ENCODE measurements at regions of chr9 and their contacts with region 1.

Region 1: GRCh38 chr9:137095664-137096517 is 9.1 kb downstream of the MAN1B1 start:
- DNase-seq: peak; percentile 93
- H3K4me3 Mint-ChIP-seq: peak overlapping the region; percentile 62
- H3K27ac Mint-ChIP-seq: peak overlapping the region; percentile 84
- H3K4me1 Mint-ChIP-seq: peaks cover 19% of the 10 kb centered on the region
- H3K27me3 Mint-ChIP-seq: no peaks in the 10 kb centered on the region

Region 2: GRCh38 chr9:136059321-136060233 is 1036.3 kb before region 1 on chr9:
- CTCF ChIA-PET with region 1: no interaction called
- POLR2A ChIA-PET with region 1: no interaction called
- intact Hi-C with region 1: no loop called
- DNase-seq: no peak
- H3K4me3 Mint-ChIP-seq: no peak overlapping the region
- H3K27ac Mint-ChIP-seq: no peak overlapping the region
- H3K4me1 Mint-ChIP-seq: peaks cover 11% of the 10 kb centered on the region
- H3K27me3 Mint-ChIP-seq: peaks cover 3% of the 10 kb centered on the region

Region 3: DNA sequence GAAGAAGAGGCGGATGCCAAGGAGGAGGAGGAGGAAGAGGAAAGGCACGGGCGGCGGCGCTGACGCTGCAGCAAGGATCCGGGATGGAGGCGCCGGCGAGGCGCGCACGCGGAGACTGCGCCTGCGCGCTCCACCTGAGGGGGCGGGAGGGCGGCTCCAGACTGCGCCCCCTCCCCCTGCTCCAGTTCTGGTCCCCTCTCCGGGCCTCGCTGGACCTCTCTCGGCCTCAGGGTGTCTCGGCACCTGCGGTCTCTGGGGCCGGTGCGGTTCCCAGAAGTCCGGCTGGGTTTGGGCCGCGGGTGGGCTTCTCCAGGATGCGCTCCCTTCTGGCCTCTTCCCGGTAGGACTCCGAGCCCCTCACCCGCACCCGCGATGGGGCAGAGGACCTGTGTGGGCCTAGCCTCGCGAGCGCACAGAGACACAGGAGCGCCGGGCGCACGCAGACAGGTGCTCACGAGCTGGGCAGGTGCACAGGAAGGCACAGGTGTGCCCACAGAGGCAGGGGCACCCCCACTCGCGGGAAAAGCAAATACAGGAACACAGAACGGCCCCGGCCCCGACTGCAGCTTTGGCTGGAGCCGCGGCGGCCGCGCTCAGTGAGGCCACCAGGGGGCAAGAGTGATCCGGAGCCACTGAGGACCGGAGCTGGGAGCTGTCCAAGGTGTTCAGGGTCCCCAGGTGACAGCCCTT is 49.6 kb before region 1 on chr9 and contains the start of gene NPDC1:
- CTCF ChIA-PET with region 1: interaction called, 15 read pairs
- POLR2A ChIA-PET with region 1: no interaction called
- intact Hi-C with region 1: no loop called
- DNase-seq: peak; percentile 90
- H3K4me3 Mint-ChIP-seq: peak within 1 kb of the TSS; percentile 67
- H3K27ac Mint-ChIP-seq: no peak within 1 kb of the TSS
- H3K4me1 Mint-ChIP-seq: peaks cover 10% of the 10 kb centered on the region
- H3K27me3 Mint-ChIP-seq: peaks cover 34% of the 10 kb centered on the region
- total RNA-seq, gene NPDC1: 36.0 to 42.6 TPM

Region 4: GRCh38 chr9:137064027-137064879 is 31.6 kb before region 1 on chr9:
- CTCF ChIA-PET with region 1: interaction called, 15 read pairs
- POLR2A ChIA-PET with region 1: no interaction called
- intact Hi-C with region 1: no loop called
- DNase-seq: peak; percentile 68
- H3K4me3 Mint-ChIP-seq: no peak overlapping the region
- H3K27ac Mint-ChIP-seq: peak overlapping the region; percentile 44
- H3K4me1 Mint-ChIP-seq: peaks cover 4% of the 10 kb centered on the region
- H3K27me3 Mint-ChIP-seq: no peaks in the 10 kb centered on the region

Region 5: GRCh38 chr9:137070201-137070905 is 25.5 kb before region 1 on chr9 and contains the start of gene SAPCD2:
- CTCF ChIA-PET with region 1: interaction called, 12 read pairs
- POLR2A ChIA-PET with region 1: interaction called, 5 read pairs
- intact Hi-C with region 1: no loop called
- DNase-seq: peak; percentile 90
- H3K4me3 Mint-ChIP-seq: peak within 1 kb of the TSS; percentile 61
- H3K27ac Mint-ChIP-seq: no peak within 1 kb of the TSS
- H3K4me1 Mint-ChIP-seq: peaks cover 8% of the 10 kb centered on the region
- H3K27me3 Mint-ChIP-seq: no peaks in the 10 kb centered on the region
- total RNA-seq, gene SAPCD2: 6.4 to 6.6 TPM

Region 6: GRCh38 chr9:137129456-137130175 is 33.7 kb after region 1 on chr9:
- CTCF ChIA-PET with region 1: interaction called, 12 read pairs
- POLR2A ChIA-PET with region 1: interaction called, 5 read pairs
- intact Hi-C with region 1: no loop called
- DNase-seq: peak; percentile 94
- H3K4me3 Mint-ChIP-seq: peak overlapping the region; percentile 84
- H3K27ac Mint-ChIP-seq: peak overlapping the region; percentile 70
- H3K4me1 Mint-ChIP-seq: peaks cover 20% of the 10 kb centered on the region
- H3K27me3 Mint-ChIP-seq: peaks cover 2% of the 10 kb centered on the region

Measured in activated CD4-positive, alpha-beta memory T cell treated with anti-CD3 and anti-CD28 coated beads for 36 hours (primary cell).